Left cardiac atrium (tissue), 4 donors: ENCODE measurements at regions of chr13 and their contacts with region 1.

Region 1: DNA sequence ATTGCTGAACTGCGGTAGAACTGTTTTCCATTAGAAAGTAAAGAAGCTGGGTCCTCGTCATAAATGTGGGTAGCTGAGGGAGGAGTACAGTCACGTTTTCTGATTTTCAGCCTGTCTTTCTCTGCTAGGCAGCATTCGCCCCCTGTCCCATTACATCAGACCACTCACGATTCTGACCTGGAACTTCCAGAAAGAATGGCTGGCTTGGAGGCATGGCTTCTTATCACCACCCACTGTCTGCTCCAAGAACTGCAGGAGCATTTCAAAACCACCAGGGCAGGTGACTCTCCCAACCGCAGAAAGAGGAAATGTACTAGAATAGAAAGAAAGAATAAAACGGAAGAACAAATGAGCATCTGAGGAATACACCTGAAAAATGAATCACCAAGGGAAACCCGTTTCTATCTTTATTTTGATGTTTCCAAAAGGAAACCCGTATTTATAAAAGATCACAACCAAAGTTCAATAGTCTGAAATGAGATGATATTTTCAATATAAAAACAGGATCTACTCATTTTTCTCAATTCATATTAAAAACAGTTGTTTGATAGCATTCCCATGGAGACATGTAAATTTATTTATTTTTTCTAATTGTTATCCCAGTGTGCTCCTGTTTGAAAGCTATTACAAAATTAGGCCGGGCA is 22.1 kb upstream of the POMP start:
- DNase-seq: peak; percentile 50
- ATAC-seq: peak; percentile 88 to 90

Region 2: GRCh38 chr13:28531077-28531844 is 105.5 kb before region 1 on chr13:
- intact Hi-C with region 1: loop called in 1 of 2 experiments (anchors 10 kb)
- DNase-seq: peak; percentile 67
- ATAC-seq: peak; percentile 35 to 64

Region 3: DNA sequence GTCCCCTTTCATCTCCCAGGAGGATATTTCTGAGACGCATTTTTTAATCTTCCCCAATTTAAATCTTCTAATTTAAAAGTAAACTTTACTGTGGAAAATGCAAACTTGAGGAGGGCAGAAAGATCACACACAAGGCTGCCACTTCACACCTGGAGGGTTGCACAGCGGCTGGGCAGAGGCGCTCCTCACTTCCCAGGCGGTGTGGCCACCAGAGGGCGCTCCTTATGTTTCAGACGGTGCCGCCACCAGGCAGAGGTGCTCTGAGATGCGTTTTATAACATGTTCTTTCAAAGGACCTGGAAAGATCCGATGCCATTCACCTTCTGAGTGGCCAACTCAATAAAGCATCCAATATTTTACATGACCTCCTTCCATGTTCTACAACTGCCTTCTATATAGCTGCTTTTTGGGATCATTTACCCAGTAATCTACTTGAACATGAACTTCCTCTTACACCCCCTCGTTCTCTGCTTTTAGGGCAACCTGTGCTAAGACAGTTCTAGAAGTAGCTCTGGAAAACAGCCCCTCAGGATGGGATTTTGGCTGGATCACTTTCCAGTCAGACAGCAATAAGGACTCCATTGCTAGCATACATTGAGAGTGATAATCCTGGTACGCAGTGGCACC is 168.5 kb after region 1 on chr13:
- intact Hi-C with region 1: no loop called
- DNase-seq: peak; percentile 49
- ATAC-seq: no peak